A549 (cell line): ENCODE measurements at regions of chr11 and their contacts with region 1.

Region 1: DNA sequence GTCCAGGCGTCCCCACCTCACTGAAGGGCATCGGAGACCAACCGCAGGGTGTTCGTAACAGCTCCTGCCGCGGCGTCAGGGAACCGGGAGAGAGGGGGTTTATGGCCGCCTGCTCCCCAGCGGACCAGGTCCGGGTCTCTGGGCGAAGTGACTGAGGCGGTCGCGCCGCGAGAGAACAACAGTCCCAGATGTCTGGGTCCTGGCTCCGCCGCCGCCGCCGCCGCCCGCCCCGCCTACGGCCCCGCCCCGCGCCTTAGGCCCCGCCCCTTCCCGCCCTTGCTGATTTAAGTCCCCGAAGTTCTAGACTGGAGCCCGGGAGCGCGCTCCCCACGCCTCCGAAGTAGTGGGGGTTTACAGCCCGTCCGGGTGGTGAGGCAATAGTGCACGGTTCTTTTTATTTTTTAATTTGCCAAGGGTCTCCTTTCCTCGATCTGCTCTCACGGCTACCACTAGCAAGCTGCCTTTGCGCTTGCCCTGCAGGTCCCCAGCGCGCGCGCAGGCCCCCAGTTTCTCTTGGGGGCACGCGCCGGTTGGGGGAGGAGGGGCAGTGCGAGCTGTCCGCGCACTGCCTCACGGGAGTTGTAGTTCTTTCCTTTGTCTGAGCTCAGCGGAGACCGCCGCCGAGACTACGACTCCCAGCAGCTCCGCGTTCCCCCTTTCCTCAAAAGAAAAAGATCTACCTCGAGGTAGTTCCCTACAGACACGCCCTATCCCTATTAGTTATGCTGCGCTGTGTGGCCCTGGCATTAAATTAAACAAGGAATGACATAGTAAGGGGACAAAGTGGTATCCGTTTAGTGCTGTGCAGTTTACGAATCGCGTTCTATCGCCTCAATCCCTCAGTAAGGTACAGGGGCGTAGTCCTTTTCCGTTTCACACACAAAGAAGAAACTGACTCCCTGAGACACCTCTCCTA is at the start of gene PGM2L1:
- DNase-seq: peak; percentile 95
- ATAC-seq: peak; percentile 91 to 92
- H3K4me3 ChIP-seq: peak within 1 kb of the TSS; percentile 99
- H3K27ac ChIP-seq: peak within 1 kb of the TSS; percentile 89 to 91
- H3K4me1 ChIP-seq: peaks cover 21% of the 10 kb centered on the region
- CTCF ChIP-seq: no peak
- EP300 ChIP-seq: no peak
- POLR2A ChIP-seq: peak; percentile 70
- RAD21 ChIP-seq: peak in 1 of 2 experiments; percentile 9; a peak in 1 of 5 replicates
- polyA plus RNA-seq, gene PGM2L1: 17.6 and 21.8 TPM in 2 replicates

Region 2: DNA sequence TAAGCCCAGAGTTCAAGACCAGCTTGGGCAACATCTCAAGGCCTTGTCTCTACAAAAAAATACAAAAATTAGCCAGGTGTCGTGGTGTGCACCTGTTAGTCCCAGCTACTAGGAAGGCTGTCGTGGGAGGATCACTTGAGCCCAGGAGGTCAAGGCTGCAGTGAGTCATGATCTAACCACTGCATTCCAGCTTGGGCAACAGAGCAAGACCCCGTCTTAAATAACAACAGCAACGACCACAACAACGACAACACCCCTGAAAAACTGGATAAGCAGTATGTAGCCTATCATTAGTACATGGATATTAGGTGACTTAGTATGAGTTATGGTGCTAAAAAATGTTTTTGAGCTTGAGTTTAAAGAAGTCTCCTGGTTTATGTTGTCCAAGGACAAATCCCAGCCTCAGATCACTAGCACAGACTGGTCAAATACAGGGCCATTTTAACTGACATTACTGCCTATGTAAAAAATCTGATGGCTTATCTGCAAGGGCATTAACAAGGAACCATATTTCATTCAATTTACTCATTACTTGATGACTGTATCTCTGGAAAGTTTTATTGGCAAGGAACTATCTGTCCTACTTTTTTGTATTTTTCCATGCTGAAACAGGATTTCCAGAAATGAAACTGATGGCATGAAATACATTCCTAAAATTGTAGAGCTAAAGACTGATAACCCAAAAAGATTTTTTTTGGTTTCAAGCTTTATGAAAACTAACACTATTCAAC is 251.1 kb before region 1 on chr11:
- CTCF ChIA-PET with region 1: no interaction called
- POLR2A ChIA-PET with region 1: no interaction called
- DNase-seq: no peak
- ATAC-seq: no peak
- H3K4me3 ChIP-seq: no peak overlapping the region
- H3K27ac ChIP-seq: peak overlapping the region; percentile 3 to 45; a peak in 4 of 6 replicates
- H3K4me1 ChIP-seq: peaks cover 43% of the 10 kb centered on the region
- CTCF ChIP-seq: no peak
- EP300 ChIP-seq: no peak
- POLR2A ChIP-seq: no peak
- RAD21 ChIP-seq: no peak

Region 3: GRCh38 chr11:74311352-74311926 is 87.1 kb before region 1 on chr11 and contains the start of gene P4HA3:
- CTCF ChIA-PET with region 1: no interaction called
- POLR2A ChIA-PET with region 1: no interaction called
- DNase-seq: peak; percentile 64 to 77
- ATAC-seq: peak; percentile 91 to 97
- H3K4me3 ChIP-seq: peak within 1 kb of the TSS; percentile 77
- H3K27ac ChIP-seq: peak within 1 kb of the TSS; percentile 91 to 94
- H3K4me1 ChIP-seq: peaks cover 50% of the 10 kb centered on the region
- CTCF ChIP-seq: peak; percentile 29
- EP300 ChIP-seq: no peak
- POLR2A ChIP-seq: peak; percentile 31
- RAD21 ChIP-seq: peak in 1 of 2 experiments; percentile 58; a peak in 3 of 5 replicates
- polyA plus RNA-seq, gene P4HA3: 50.4 and 58.5 TPM in 2 replicates

Region 4: GRCh38 chr11:74345420-74345819 is 53.1 kb before region 1 on chr11:
- CTCF ChIA-PET with region 1: no interaction called
- POLR2A ChIA-PET with region 1: interaction called, 10 read pairs
- DNase-seq: no peak
- ATAC-seq: no peak
- H3K4me3 ChIP-seq: no peak overlapping the region
- H3K27ac ChIP-seq: no peak overlapping the region
- H3K4me1 ChIP-seq: peaks cover 8% of the 10 kb centered on the region
- CTCF ChIP-seq: no peak
- EP300 ChIP-seq: no peak
- POLR2A ChIP-seq: no peak
- RAD21 ChIP-seq: no peak

Region 5: DNA sequence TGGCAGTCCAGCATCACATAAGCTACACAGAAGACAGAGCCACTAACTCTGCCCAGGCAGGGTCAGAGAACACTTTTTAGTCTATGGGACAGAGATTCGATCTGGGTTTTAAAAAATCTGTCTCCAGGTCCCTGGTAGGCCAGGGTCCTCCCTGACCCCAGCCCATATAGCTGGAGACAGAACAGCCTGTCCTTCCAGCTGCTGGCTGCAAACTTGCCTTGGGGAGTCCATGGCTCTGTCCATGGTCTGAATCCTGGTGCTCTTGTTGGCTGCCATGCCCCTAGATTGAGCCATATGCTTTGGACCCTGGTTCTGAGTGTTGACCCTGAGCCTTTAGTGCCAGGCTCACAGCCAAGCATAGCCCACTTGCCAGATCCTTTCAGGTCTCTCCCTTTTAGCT is 108.3 kb after region 1 on chr11:
- CTCF ChIA-PET with region 1: no interaction called
- POLR2A ChIA-PET with region 1: no interaction called
- DNase-seq: no peak
- ATAC-seq: no peak
- H3K4me3 ChIP-seq: no peak overlapping the region
- H3K27ac ChIP-seq: no peak overlapping the region
- H3K4me1 ChIP-seq: peaks cover 15% of the 10 kb centered on the region
- CTCF ChIP-seq: no peak
- EP300 ChIP-seq: no peak
- POLR2A ChIP-seq: no peak
- RAD21 ChIP-seq: no peak

Region 6: DNA sequence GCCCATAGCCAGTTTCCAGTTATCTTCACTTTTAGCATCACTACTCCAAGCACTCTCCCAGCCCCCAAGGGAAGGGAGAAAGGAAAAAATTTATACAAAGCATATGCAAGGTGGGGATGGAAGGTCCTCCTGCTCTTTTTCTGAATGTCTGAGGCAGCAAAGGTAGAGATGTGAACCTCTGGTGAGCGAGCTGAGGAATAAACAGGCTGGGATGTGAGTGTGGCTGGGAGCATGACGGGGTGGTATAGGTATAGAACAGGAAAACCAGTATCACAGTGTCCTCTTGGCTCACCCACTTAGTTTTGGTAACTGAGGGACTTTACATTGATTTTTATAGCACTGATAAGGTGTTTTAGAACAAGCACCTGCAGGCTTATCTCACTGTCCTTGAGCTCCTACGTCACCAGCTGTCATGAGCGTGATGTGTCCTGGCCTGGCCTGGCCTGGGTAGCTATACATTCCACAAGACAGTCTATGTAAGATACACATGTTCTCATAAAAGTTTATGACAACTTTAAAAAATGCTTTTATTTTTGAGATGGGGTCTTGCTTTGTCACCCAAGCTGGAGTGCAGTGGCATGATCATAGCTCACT is 183.5 kb after region 1 on chr11:
- CTCF ChIA-PET with region 1: no interaction called
- POLR2A ChIA-PET with region 1: no interaction called
- DNase-seq: no peak
- ATAC-seq: no peak
- H3K4me3 ChIP-seq: no peak overlapping the region
- H3K27ac ChIP-seq: no peak overlapping the region
- H3K4me1 ChIP-seq: no peaks in the 10 kb centered on the region
- CTCF ChIP-seq: no peak
- EP300 ChIP-seq: no peak
- POLR2A ChIP-seq: no peak
- RAD21 ChIP-seq: no peak